ENCODE measurements at regions of chr20 and their contacts with region 1.

Region 1: DNA sequence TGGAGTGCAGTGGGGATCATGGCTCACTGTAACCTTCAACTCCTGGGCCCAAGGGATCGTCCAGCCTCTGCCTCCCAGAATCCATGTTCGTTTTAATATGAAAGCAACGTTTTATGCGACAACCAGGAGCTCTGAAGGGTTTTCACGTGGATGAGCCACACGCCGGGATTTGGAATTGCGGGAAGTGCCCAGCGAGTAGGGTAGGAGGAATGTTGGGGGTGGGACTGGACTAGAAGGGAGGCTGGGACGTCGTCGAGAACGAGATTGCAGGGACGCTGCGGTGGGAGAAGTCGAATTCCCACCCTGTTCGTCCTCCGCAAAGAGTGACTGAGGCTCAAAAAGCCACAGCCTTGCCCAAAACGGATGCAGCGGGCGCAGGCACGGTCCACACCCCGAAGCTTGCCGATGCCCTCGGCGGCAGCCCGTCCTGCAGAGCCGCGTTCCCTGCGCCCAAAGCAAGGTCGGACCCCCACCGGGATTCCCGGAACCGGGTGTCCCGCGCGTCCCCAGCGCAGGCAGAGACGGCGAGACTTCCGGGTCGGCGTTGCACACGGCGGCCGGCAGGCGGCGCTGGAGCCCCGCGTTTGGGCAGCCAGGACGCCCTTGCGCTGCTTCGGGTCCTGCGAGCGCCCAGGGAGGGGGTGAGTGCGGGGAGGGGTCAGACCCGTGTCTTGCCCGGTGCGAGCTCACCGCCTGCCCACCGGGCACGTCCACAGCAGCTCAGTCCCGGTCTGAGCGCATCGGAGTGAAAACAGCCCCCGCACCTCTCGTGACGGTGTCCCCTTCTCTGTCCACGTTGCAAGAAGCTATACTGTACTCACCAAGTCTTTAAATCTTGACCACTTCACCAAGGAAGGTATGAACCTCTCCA is 87.8 kb downstream of the DHX35 start:
- DNase-seq: peak; percentile 64
- H3K4me3 Mint-ChIP-seq: peak overlapping the region; percentile 78
- H3K27ac Mint-ChIP-seq: no peak overlapping the region
- H3K4me1 Mint-ChIP-seq: peaks cover 5% of the 10 kb centered on the region
- H3K27me3 Mint-ChIP-seq: peaks cover 15% of the 10 kb centered on the region
- CTCF ChIP-seq: peak; percentile 96

Region 2: DNA sequence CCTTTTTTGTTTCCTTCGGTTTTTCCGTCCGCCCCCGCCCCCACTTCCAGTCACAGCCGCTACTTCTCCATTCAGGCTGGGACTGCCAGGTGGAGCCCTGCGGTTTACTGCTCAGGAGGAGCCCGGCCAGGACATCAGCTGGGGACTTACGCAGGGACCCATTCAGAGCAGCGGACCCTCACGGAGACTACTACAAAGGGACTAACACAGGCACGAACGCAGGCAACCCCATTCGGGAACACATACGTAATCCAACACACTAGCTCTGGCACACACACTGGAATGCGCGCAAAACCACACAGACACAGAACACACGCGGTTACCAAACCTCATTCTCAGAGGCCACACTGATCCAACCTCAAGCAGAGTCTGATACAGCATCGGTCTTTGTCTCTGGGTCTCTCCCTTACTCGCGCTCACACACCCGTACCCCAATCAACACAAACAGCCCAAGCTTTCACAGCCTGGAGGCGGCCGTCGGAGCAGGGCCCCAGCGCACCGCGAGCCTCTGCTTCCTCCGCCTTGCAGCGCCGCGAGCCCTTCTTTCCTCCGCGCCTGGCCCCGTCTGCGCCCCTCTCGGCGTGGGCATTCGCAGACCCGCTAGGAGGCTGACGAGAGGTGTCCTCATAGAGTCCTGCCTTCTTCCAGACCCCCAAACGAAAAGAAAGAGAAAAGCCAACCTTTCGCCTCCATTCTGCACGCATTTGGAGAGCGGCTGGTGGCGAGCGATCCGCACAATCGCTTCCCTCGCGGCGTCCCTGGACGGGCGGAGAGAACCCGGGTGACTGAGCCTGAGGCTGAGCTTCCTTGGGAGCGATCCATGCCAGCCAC is 326.7 kb before region 1 on chr20:
- CTCF ChIA-PET with region 1: no interaction called
- POLR2A ChIA-PET with region 1: no interaction called
- intact Hi-C with region 1: no loop called
- DNase-seq: no peak
- H3K4me3 Mint-ChIP-seq: no peak overlapping the region
- H3K27ac Mint-ChIP-seq: no peak overlapping the region
- H3K4me1 Mint-ChIP-seq: no peaks in the 10 kb centered on the region
- H3K27me3 Mint-ChIP-seq: peaks cover 100% of the 10 kb centered on the region
- CTCF ChIP-seq: no peak

Region 3: DNA sequence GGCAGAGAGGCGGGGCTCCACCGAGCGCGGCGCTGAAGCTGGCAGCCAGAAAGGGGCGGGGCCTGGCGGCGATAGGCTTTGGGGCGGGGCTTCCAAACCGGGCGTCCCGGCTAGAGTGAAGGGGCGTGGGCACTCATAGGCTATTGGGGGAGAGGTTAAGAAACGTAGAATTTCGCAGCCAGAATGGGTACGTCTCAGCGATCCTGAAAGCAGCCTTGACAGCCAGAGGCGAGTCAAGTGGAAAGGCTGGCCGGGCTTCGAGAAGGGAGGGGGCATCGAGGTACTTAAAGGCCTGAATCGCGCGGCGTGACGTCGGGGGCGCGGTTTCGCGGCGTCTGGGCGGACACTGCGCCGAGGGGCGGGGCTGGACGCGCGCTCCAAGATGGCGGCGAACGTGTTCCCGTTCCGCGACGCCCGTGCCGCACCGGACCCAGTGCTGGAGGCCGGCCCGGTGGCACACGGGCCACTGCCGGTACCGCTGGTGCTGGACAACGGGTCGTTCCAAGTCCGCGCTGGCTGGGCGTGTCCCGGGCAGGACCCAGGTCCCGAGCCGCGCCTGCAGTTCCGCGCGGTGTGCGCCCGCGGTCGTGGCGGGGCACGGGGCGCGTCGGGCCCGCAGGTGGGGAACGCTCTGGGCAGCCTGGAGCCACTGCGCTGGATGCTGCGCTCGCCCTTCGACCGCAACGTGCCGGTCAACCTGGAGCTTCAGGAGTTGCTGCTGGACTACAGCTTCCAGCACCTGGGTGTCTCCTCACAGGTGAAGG is 301.6 kb before region 1 on chr20 and contains the start of gene ACTR5:
- CTCF ChIA-PET with region 1: interaction called, 40 read pairs
- POLR2A ChIA-PET with region 1: interaction called, 3 read pairs
- intact Hi-C with region 1: loop called (anchors 10 kb)
- DNase-seq: peak; percentile 83
- H3K4me3 Mint-ChIP-seq: peak within 1 kb of the TSS; percentile 93
- H3K27ac Mint-ChIP-seq: peak within 1 kb of the TSS; percentile 95
- H3K4me1 Mint-ChIP-seq: peaks cover 18% of the 10 kb centered on the region
- H3K27me3 Mint-ChIP-seq: no peaks in the 10 kb centered on the region
- CTCF ChIP-seq: no peak
- total RNA-seq, gene ACTR5: 6.0 and 6.9 TPM in 2 replicates

Region 4: GRCh38 chr20:38893565-38894090 is 156.3 kb before region 1 on chr20:
- CTCF ChIA-PET with region 1: interaction called, 18 read pairs
- POLR2A ChIA-PET with region 1: no interaction called
- intact Hi-C with region 1: loop called (anchors 1 kb)
- DNase-seq: peak; percentile 59
- H3K4me3 Mint-ChIP-seq: peak overlapping the region; percentile 57
- H3K27ac Mint-ChIP-seq: no peak overlapping the region
- H3K4me1 Mint-ChIP-seq: peaks cover 10% of the 10 kb centered on the region
- H3K27me3 Mint-ChIP-seq: peaks cover 14% of the 10 kb centered on the region
- CTCF ChIP-seq: peak; percentile 92

Region 5: DNA sequence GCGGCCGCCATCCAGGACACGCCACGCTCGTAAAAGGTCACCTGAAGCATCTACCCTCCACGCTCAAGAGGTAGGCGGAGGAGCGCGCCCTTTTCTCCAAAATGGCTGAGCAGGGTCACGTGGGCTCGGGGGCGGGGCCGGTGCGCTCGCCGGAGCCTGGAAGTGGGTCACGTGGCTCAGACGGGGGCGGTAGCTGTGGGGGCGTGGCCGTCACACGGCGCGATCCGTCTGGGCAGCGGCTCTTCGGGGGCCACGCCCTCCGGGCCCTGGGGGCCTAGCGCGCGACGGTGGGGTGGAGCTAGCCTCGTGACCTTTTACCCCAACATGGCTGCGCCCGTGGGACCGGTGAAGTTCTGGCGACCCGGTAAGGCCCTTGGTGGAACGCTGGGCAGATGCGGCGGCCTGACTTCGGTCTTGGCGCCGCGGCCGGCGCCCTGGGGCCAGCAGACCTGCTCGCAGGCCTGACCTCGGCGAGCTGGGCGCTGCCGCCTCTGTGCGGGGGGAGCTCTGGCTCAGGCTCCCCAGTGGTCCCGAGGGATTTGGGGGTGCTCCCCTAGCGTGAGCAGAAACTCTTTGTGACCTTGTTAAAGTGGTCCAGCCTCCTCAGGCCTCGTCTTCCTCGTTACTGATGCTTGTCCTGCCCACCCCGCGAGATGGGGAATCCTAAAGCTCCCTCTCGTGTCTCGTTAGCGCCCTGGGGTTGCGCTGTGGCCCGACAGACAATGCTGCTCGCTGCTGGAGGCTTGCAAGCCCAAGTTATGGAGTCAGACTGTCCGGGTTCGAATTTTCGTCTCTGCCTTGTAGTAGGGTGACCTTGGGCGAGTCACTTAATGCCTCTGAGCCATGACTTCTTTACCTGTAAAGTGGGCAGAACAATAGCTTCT is 87.6 kb before region 1 on chr20 and contains the start of gene DHX35:
- CTCF ChIA-PET with region 1: interaction called, 83 read pairs
- POLR2A ChIA-PET with region 1: interaction called, 6 read pairs
- intact Hi-C with region 1: loop called (anchors 2 kb)
- DNase-seq: peak; percentile 95
- H3K4me3 Mint-ChIP-seq: peak within 1 kb of the TSS; percentile 93
- H3K27ac Mint-ChIP-seq: peak within 1 kb of the TSS; percentile 93
- H3K4me1 Mint-ChIP-seq: peaks cover 19% of the 10 kb centered on the region
- H3K27me3 Mint-ChIP-seq: no peaks in the 10 kb centered on the region
- CTCF ChIP-seq: no peak
- total RNA-seq, gene DHX35: 7.8 and 8.3 TPM in 2 replicates

Region 6: GRCh38 chr20:39004508-39004907 is 45.4 kb before region 1 on chr20:
- CTCF ChIA-PET with region 1: interaction called, 16 read pairs
- POLR2A ChIA-PET with region 1: no interaction called
- intact Hi-C with region 1: no loop called
- DNase-seq: peak; percentile 50
- H3K4me3 Mint-ChIP-seq: no peak overlapping the region
- H3K27ac Mint-ChIP-seq: no peak overlapping the region
- H3K4me1 Mint-ChIP-seq: no peaks in the 10 kb centered on the region
- H3K27me3 Mint-ChIP-seq: no peaks in the 10 kb centered on the region
- CTCF ChIP-seq: no peak

Region 7: GRCh38 chr20:39070484-39071231 is 20.7 kb after region 1 on chr20:
- CTCF ChIA-PET with region 1: interaction called, 622 read pairs
- POLR2A ChIA-PET with region 1: interaction called, 4 read pairs
- intact Hi-C with region 1: no loop called
- DNase-seq: peak; percentile 71
- H3K4me3 Mint-ChIP-seq: no peak overlapping the region
- H3K27ac Mint-ChIP-seq: no peak overlapping the region
- H3K4me1 Mint-ChIP-seq: peaks cover 16% of the 10 kb centered on the region
- H3K27me3 Mint-ChIP-seq: peaks cover 13% of the 10 kb centered on the region
- CTCF ChIP-seq: no peak

Region 8: GRCh38 chr20:39264506-39265172 is 214.7 kb after region 1 on chr20:
- CTCF ChIA-PET with region 1: interaction called, 13 read pairs
- POLR2A ChIA-PET with region 1: no interaction called
- intact Hi-C with region 1: no loop called
- DNase-seq: peak; percentile 86
- H3K4me3 Mint-ChIP-seq: no peak overlapping the region
- H3K27ac Mint-ChIP-seq: no peak overlapping the region
- H3K4me1 Mint-ChIP-seq: peaks cover 19% of the 10 kb centered on the region
- H3K27me3 Mint-ChIP-seq: no peaks in the 10 kb centered on the region
- CTCF ChIP-seq: peak; percentile 87

Region 9: GRCh38 chr20:39489986-39490560 is 440.2 kb after region 1 on chr20:
- CTCF ChIA-PET with region 1: no interaction called
- POLR2A ChIA-PET with region 1: no interaction called
- intact Hi-C with region 1: no loop called
- DNase-seq: no peak
- H3K4me3 Mint-ChIP-seq: no peak overlapping the region
- H3K27ac Mint-ChIP-seq: no peak overlapping the region
- H3K4me1 Mint-ChIP-seq: no peaks in the 10 kb centered on the region
- H3K27me3 Mint-ChIP-seq: no peaks in the 10 kb centered on the region
- CTCF ChIP-seq: no peak